Psoas muscle (tissue), 8 donors: ENCODE measurements at regions of chr3 and their contacts with region 1.

Region 1: GRCh38 chr3:16824081-16824696 is 60.6 kb upstream of the PLCL2 start:
- DNase-seq: no peak
- ATAC-seq: no peak
- H3K4me3 ChIP-seq: no peak overlapping the region
- H3K27ac ChIP-seq: no peak overlapping the region
- H3K4me1 ChIP-seq: peaks cover 7% of the 10 kb centered on the region
- H3K27me3 ChIP-seq: no peaks in the 10 kb centered on the region
- CTCF ChIP-seq: no peak

Region 2: DNA sequence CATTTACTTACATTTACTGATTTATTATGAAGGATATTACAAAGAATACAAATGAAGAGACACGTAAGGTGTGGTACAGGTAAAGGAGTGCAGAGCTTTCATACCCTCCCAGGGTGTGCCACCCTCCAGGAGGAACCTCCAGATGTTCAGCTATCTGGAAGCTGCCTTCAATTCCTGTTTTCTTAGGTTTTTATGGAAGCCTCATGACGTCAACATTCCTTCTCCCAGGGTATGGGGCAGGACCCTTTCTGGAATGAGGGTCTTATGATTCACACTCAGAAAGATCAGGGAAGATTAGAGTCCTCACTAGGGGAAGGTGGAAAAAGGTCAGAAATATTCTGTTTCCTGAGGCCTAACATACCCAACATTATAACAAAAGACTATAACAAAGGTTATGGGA is 39.3 kb before region 1 on chr3:
- intact Hi-C with region 1: loop called in 1 of 2 experiments (anchors 5 kb)
- DNase-seq: no peak
- ATAC-seq: no peak
- H3K4me3 ChIP-seq: no peak overlapping the region
- H3K27ac ChIP-seq: no peak overlapping the region
- H3K4me1 ChIP-seq: peaks cover 4% of the 10 kb centered on the region
- H3K27me3 ChIP-seq: no peaks in the 10 kb centered on the region
- CTCF ChIP-seq: no peak